Common myeloid progenitor, CD34-positive (primary cell): ENCODE measurements at regions of chr17 and their contacts with region 1.

Region 1: GRCh38 chr17:17757391-17757791 is 76.1 kb downstream of the RAI1 start:
- DNase-seq: peak; percentile 84 to 98 (median 97)
- H3K4me3 ChIP-seq: peak overlapping the region in 5 of 7 experiments; percentile 30 to 58 (median 50)
- H3K27ac ChIP-seq: peak overlapping the region; percentile 85 to 90
- H3K4me1 ChIP-seq: peaks cover 12 to 100% (median 100%) of the 10 kb centered on the region in 4 experiments
- H3K27me3 ChIP-seq: no peaks in the 10 kb centered on the region

Region 2: DNA sequence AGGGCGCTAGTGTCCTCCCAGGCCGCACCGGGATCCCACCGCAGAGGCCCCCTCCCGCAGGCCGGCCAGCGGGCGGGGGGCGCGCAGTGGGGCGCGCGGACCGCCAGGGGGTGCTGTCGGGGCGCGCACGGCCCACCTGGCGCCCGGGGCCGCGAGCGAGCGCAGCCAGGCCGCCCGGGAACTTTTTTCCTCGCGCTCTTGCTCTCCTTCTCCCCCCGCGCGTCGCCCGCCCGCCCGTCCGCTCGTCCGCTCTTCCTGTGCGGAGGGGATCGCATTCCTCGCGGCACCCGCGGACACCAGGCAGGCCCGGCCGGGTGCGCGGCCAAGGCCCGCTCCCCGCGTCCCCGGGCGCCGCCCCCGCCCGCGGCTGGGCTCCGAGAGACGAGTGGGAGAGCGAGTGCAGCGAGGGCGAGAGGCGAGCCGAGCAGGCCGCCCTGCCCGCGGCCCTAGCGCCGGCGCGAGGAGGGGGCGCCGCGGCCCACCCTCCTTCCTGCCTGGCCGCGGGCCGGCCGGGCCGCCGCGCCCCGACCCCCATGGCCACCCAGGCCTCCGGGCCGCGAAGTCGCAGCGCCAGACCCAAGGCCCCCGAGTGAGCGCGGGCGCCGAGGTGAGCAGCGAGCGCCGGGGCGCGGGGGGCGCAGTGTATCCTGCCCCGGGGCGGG is 76.1 kb before region 1 on chr17 and contains the start of gene RAI1:
- CTCF ChIA-PET with region 1: interaction called, 9 read pairs
- POLR2A ChIA-PET with region 1: interaction called, 12 read pairs
- DNase-seq: peak; percentile 73 to 86 (median 83)
- H3K4me3 ChIP-seq: peak within 1 kb of the TSS; percentile 56 to 81 (median 77)
- H3K27ac ChIP-seq: peak within 1 kb of the TSS; percentile 70 to 89
- H3K4me1 ChIP-seq: peaks cover 0 to 57% (median 38%) of the 10 kb centered on the region in 4 experiments
- H3K27me3 ChIP-seq: no peaks in the 10 kb centered on the region

Region 3: GRCh38 chr17:17739388-17740066 is 17.9 kb before region 1 on chr17:
- CTCF ChIA-PET with region 1: interaction called, 16 read pairs
- POLR2A ChIA-PET with region 1: interaction called, 3 read pairs
- DNase-seq: peak in 1 of 3 donors; percentile 31
- H3K4me3 ChIP-seq: no peak overlapping the region
- H3K27ac ChIP-seq: peak overlapping the region in 1 of 2 experiments; percentile 9
- H3K4me1 ChIP-seq: peaks cover 0 to 52% (median 45%) of the 10 kb centered on the region in 4 experiments
- H3K27me3 ChIP-seq: no peaks in the 10 kb centered on the region

Region 4: DNA sequence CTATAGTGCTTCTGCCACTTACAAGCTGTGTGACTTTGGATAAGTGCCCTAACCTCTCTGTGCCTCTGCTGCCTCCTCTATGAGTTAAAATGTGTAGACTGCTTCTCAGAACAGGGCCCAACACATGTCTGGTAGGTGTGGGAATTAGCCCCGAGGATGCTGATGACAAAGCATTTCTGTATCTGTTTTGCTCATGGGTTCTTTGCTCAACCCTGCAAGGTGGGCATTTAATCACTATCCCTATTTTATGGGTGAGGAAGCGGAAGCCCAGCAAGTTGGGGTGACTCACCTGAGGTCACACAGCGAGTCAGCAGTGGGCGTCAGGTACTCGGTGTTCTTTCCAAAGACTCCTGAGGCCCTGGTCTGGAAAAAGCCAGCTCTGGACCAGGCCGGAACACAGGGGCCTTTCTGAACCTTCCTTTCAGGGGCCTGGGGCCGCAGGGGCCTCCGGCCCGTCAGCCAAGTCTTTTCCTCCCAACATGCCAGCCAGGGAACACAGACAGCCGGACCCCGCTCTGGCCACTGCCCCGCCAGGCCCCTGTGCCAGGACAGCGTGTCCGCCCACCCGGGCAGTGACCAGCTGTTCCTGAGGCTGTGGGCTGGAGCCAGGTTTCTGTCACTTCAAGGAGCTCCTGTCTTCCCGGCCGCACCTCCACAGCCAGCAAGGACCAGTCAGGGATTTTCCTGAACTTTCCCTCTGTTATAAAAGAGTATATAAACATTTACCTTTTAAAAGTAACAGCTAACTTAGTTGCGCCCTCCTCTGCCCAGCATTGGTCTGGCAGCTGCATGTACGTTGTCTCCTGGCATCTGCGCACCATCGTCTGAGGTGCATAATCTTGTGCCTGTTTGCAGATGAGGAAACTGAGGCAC is 16.9 kb after region 1 on chr17:
- CTCF ChIA-PET with region 1: interaction called, 16 read pairs
- POLR2A ChIA-PET with region 1: interaction called, 4 read pairs
- DNase-seq: peak in 2 of 3 donors; percentile 55 to 59
- H3K4me3 ChIP-seq: no peak overlapping the region
- H3K27ac ChIP-seq: no peak overlapping the region
- H3K4me1 ChIP-seq: peaks cover 0 to 33% (median 19%) of the 10 kb centered on the region in 4 experiments
- H3K27me3 ChIP-seq: no peaks in the 10 kb centered on the region

Region 5: GRCh38 chr17:17781591-17782496 is 24.5 kb after region 1 on chr17:
- CTCF ChIA-PET with region 1: interaction called, 10 read pairs
- POLR2A ChIA-PET with region 1: no interaction called
- DNase-seq: peak in 2 of 3 donors; percentile 62 to 70
- H3K4me3 ChIP-seq: peak overlapping the region; percentile 35 to 78 (median 63)
- H3K27ac ChIP-seq: no peak overlapping the region
- H3K4me1 ChIP-seq: peaks cover 0 to 67% (median 52%) of the 10 kb centered on the region in 4 experiments
- H3K27me3 ChIP-seq: no peaks in the 10 kb centered on the region

Region 6: DNA sequence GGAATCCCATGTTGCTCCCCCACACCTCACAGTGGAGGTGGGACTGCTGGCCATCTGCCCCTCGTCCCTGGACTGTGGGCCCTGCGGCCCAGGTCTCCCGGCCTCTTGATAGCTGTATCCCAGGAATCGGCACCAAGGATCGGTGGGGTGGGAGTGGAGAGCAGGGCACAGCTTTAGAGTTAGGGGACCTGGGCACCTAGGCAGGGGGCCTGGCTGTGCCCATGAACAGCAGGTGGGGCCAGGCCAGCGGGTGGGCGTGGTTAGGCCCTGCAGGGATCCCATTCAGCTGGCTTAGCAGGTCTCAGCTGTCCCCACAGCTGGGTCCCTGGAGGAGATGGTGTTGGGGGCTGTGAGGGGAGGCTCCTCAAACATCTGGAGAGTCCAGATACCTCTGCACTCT is 30.2 kb after region 1 on chr17:
- CTCF ChIA-PET with region 1: interaction called, 10 read pairs
- POLR2A ChIA-PET with region 1: no interaction called
- DNase-seq: no peak
- H3K4me3 ChIP-seq: no peak overlapping the region
- H3K27ac ChIP-seq: no peak overlapping the region
- H3K4me1 ChIP-seq: peaks cover 0 to 68% (median 51%) of the 10 kb centered on the region in 4 experiments
- H3K27me3 ChIP-seq: no peaks in the 10 kb centered on the region